Activated CD8-positive, alpha-beta T cell treated with anti-CD3 and anti-CD28 coated beads for 36 hours (primary cell): ENCODE measurements at regions of chr15 and their contacts with region 1.

Region 1: DNA sequence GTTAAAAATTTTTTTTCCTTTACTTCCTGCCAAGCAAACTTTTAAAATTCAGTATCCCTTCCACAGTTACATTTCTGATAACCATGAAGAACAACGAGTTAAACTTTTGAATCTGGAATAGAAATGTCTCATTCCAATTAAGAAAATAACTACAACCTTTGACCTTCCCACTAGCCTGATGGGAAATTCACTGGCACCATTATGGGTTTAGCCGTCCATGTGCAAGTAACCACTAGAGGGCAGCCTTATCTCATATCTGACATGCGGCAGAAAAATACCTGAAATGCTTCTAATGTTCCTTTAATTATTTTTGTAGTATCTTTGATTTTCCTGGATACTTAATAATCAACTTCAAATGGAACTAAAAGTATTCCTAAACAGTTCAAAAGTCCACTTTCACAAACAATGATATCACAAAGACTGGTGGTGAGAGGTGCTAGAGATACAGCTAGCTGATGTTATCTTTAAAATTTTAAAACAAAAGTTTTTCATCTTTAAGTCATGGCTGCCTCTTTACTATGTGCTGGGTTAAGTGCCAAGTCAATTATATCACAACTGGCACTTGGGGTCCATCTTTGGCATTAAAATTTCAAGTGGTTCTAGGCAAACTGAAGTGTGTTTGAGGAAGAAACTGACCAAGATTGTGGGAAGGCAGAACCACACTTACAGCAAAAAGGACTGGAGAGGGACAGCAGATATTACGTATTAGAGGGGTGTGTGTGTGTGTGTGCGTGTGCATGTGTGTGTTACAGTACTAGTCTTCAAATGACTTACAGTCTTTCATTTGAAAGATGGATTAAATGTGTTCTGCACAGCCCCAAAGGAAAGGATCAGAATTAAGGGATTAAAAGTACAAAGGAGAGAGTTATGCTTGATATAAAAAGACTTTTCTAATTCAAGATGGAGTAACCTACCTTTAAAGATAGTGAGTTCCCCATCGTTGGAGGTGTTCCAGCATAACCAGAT is 107.1 kb upstream of the ICE2 start:
- DNase-seq: peak; percentile 71
- ATAC-seq: no peak
- H3K4me3 Mint-ChIP-seq: peak overlapping the region; percentile 62
- H3K27ac Mint-ChIP-seq: peak overlapping the region; percentile 82
- H3K4me1 Mint-ChIP-seq: peaks cover 79% of the 10 kb centered on the region
- H3K27me3 Mint-ChIP-seq: no peaks in the 10 kb centered on the region
- CTCF ChIP-seq: peak; percentile 89

Region 2: GRCh38 chr15:60526127-60526625 is 59.9 kb before region 1 on chr15:
- CTCF ChIA-PET with region 1: interaction called, 43 read pairs
- POLR2A ChIA-PET with region 1: interaction called, 3 read pairs
- intact Hi-C with region 1: no loop called
- DNase-seq: peak; percentile 27
- ATAC-seq: peak; percentile 36
- H3K4me3 Mint-ChIP-seq: no peak overlapping the region
- H3K27ac Mint-ChIP-seq: peak overlapping the region; percentile 81
- H3K4me1 Mint-ChIP-seq: peaks cover 56% of the 10 kb centered on the region
- H3K27me3 Mint-ChIP-seq: no peaks in the 10 kb centered on the region
- CTCF ChIP-seq: no peak

Region 3: GRCh38 chr15:60573936-60574335 is 12.1 kb before region 1 on chr15:
- CTCF ChIA-PET with region 1: interaction called, 52 read pairs
- POLR2A ChIA-PET with region 1: interaction called, 19 read pairs
- intact Hi-C with region 1: no loop called
- DNase-seq: peak; percentile 64
- ATAC-seq: peak; percentile 66
- H3K4me3 Mint-ChIP-seq: peak overlapping the region; percentile 42
- H3K27ac Mint-ChIP-seq: peak overlapping the region; percentile 91
- H3K4me1 Mint-ChIP-seq: peaks cover 84% of the 10 kb centered on the region
- H3K27me3 Mint-ChIP-seq: no peaks in the 10 kb centered on the region
- CTCF ChIP-seq: no peak

Region 4: GRCh38 chr15:60626669-60627068 is 40.6 kb after region 1 on chr15:
- CTCF ChIA-PET with region 1: no interaction called
- POLR2A ChIA-PET with region 1: no interaction called
- intact Hi-C with region 1: no loop called
- DNase-seq: no peak
- ATAC-seq: no peak
- H3K4me3 Mint-ChIP-seq: no peak overlapping the region
- H3K27ac Mint-ChIP-seq: no peak overlapping the region
- H3K4me1 Mint-ChIP-seq: no peaks in the 10 kb centered on the region
- H3K27me3 Mint-ChIP-seq: no peaks in the 10 kb centered on the region
- CTCF ChIP-seq: no peak

Region 5: GRCh38 chr15:60798821-60799220 is 212.8 kb after region 1 on chr15:
- CTCF ChIA-PET with region 1: interaction called, 16 read pairs
- POLR2A ChIA-PET with region 1: no interaction called
- intact Hi-C with region 1: loop called (anchors 5 kb)
- DNase-seq: peak; percentile 78
- ATAC-seq: peak; percentile 81
- H3K4me3 Mint-ChIP-seq: no peak overlapping the region
- H3K27ac Mint-ChIP-seq: peak overlapping the region; percentile 78
- H3K4me1 Mint-ChIP-seq: peaks cover 76% of the 10 kb centered on the region
- H3K27me3 Mint-ChIP-seq: no peaks in the 10 kb centered on the region
- CTCF ChIP-seq: no peak

Region 6: GRCh38 chr15:60899322-60899966 is 313.4 kb after region 1 on chr15:
- CTCF ChIA-PET with region 1: interaction called, 18 read pairs
- POLR2A ChIA-PET with region 1: interaction called, 4 read pairs
- intact Hi-C with region 1: loop called (anchors 5 kb)
- DNase-seq: peak; percentile 49
- ATAC-seq: peak; percentile 83
- H3K4me3 Mint-ChIP-seq: no peak overlapping the region
- H3K27ac Mint-ChIP-seq: peak overlapping the region; percentile 47
- H3K4me1 Mint-ChIP-seq: peaks cover 38% of the 10 kb centered on the region
- H3K27me3 Mint-ChIP-seq: peaks cover 3% of the 10 kb centered on the region
- CTCF ChIP-seq: no peak

Region 7: GRCh38 chr15:60932051-60932915 is 346.3 kb after region 1 on chr15:
- CTCF ChIA-PET with region 1: interaction called, 28 read pairs
- POLR2A ChIA-PET with region 1: no interaction called
- intact Hi-C with region 1: no loop called
- DNase-seq: peak; percentile 54
- ATAC-seq: peak; percentile 69
- H3K4me3 Mint-ChIP-seq: no peak overlapping the region
- H3K27ac Mint-ChIP-seq: no peak overlapping the region
- H3K4me1 Mint-ChIP-seq: peaks cover 6% of the 10 kb centered on the region
- H3K27me3 Mint-ChIP-seq: peaks cover 4% of the 10 kb centered on the region
- CTCF ChIP-seq: no peak